CD4-positive, alpha-beta T cell (primary cell): ENCODE measurements at regions of chr9 and their contacts with region 1.

Region 1: GRCh38 chr9:136539427-136540421 is 6.1 kb downstream of the NOTCH1 start:
- DNase-seq: peak; percentile 54 to 95 (median 90)
- ATAC-seq: peak; percentile 68
- H3K4me3 ChIP-seq: peak overlapping the region; percentile 50
- H3K4me3 Mint-ChIP-seq: peak overlapping the region; percentile 91
- H3K27ac ChIP-seq: peak overlapping the region; percentile 94
- H3K27ac Mint-ChIP-seq: peak overlapping the region; percentile 97
- H3K4me1 ChIP-seq: peaks cover 94% of the 10 kb centered on the region
- H3K4me1 Mint-ChIP-seq: peaks cover 57% of the 10 kb centered on the region
- H3K27me3 ChIP-seq: no peaks in the 10 kb centered on the region
- H3K27me3 Mint-ChIP-seq: no peaks in the 10 kb centered on the region
- CTCF ChIP-seq: no peak

Region 2: DNA sequence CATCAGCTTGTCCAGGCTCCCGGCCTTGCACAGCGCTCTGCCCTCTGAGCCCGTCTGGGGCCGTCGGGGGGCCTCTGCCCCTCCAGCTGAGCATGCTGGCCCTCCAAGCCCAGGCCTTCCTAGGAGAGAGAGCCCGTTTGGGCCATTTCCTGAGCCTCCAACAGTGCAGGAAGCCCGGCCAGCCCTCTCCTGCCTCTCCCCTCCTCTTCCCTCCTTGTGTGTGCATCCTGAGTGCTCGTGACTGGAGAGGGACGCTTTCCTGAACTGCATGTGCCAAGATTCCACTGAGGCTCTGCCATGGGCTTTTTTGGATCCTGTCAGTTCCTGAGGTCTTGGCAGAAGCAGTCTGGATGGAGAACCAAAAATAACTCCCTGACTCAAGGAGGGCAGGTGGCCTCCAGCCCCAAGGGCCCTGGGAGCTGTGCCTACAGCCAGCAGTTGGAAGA is 1436.7 kb before region 1 on chr9:
- CTCF ChIA-PET with region 1: no interaction called
- POLR2A ChIA-PET with region 1: no interaction called
- intact Hi-C with region 1: no loop called
- DNase-seq: no peak
- ATAC-seq: no peak
- H3K4me3 ChIP-seq: no peak overlapping the region
- H3K4me3 Mint-ChIP-seq: no peak overlapping the region
- H3K27ac ChIP-seq: no peak overlapping the region
- H3K27ac Mint-ChIP-seq: no peak overlapping the region
- H3K4me1 ChIP-seq: no peaks in the 10 kb centered on the region
- H3K4me1 Mint-ChIP-seq: no peaks in the 10 kb centered on the region
- H3K27me3 ChIP-seq: peaks cover 5 to 34% of the 10 kb centered on the region in 2 experiments
- H3K27me3 Mint-ChIP-seq: peaks cover 47% of the 10 kb centered on the region
- CTCF ChIP-seq: no peak

Region 3: GRCh38 chr9:136474974-136475865 is 64.5 kb before region 1 on chr9:
- CTCF ChIA-PET with region 1: no interaction called
- POLR2A ChIA-PET with region 1: no interaction called
- intact Hi-C with region 1: no loop called
- DNase-seq: no peak
- ATAC-seq: no peak
- H3K4me3 ChIP-seq: no peak overlapping the region
- H3K4me3 Mint-ChIP-seq: no peak overlapping the region
- H3K27ac ChIP-seq: no peak overlapping the region
- H3K27ac Mint-ChIP-seq: no peak overlapping the region
- H3K4me1 ChIP-seq: peaks cover 9% of the 10 kb centered on the region
- H3K4me1 Mint-ChIP-seq: peaks cover 21% of the 10 kb centered on the region
- H3K27me3 ChIP-seq: no peaks in the 10 kb centered on the region
- H3K27me3 Mint-ChIP-seq: no peaks in the 10 kb centered on the region
- CTCF ChIP-seq: no peak

Region 4: GRCh38 chr9:136521537-136521936 is 18.2 kb before region 1 on chr9:
- CTCF ChIA-PET with region 1: no interaction called
- POLR2A ChIA-PET with region 1: interaction called, 49 read pairs
- intact Hi-C with region 1: no loop called
- DNase-seq: peak in 2 of 14 experiments; percentile 66 to 78
- ATAC-seq: no peak
- H3K4me3 ChIP-seq: no peak overlapping the region
- H3K4me3 Mint-ChIP-seq: no peak overlapping the region
- H3K27ac ChIP-seq: no peak overlapping the region
- H3K27ac Mint-ChIP-seq: no peak overlapping the region
- H3K4me1 ChIP-seq: no peaks in the 10 kb centered on the region
- H3K4me1 Mint-ChIP-seq: no peaks in the 10 kb centered on the region
- H3K27me3 ChIP-seq: no peaks in the 10 kb centered on the region
- H3K27me3 Mint-ChIP-seq: no peaks in the 10 kb centered on the region
- CTCF ChIP-seq: no peak

Region 5: GRCh38 chr9:136527721-136528691 is 11.7 kb before region 1 on chr9:
- CTCF ChIA-PET with region 1: interaction called, 5 read pairs
- POLR2A ChIA-PET with region 1: interaction called, 49 read pairs
- intact Hi-C with region 1: no loop called
- DNase-seq: peak in 1 of 14 experiments; percentile 60
- ATAC-seq: peak; percentile 30
- H3K4me3 ChIP-seq: no peak overlapping the region
- H3K4me3 Mint-ChIP-seq: no peak overlapping the region
- H3K27ac ChIP-seq: peak overlapping the region in 1 of 2 donors; percentile 50
- H3K27ac Mint-ChIP-seq: peak overlapping the region; percentile 55
- H3K4me1 ChIP-seq: peaks cover 47% of the 10 kb centered on the region
- H3K4me1 Mint-ChIP-seq: peaks cover 18% of the 10 kb centered on the region
- H3K27me3 ChIP-seq: no peaks in the 10 kb centered on the region
- H3K27me3 Mint-ChIP-seq: no peaks in the 10 kb centered on the region
- CTCF ChIP-seq: no peak

Region 6: GRCh38 chr9:136551401-136552116 is 11.8 kb after region 1 on chr9:
- CTCF ChIA-PET with region 1: no interaction called
- POLR2A ChIA-PET with region 1: interaction called, 17 read pairs
- intact Hi-C with region 1: no loop called
- DNase-seq: peak in 1 of 14 experiments; percentile 55
- ATAC-seq: no peak
- H3K4me3 ChIP-seq: no peak overlapping the region
- H3K4me3 Mint-ChIP-seq: peak overlapping the region; percentile 66
- H3K27ac ChIP-seq: no peak overlapping the region
- H3K27ac Mint-ChIP-seq: peak overlapping the region; percentile 77
- H3K4me1 ChIP-seq: peaks cover 34% of the 10 kb centered on the region
- H3K4me1 Mint-ChIP-seq: peaks cover 21% of the 10 kb centered on the region
- H3K27me3 ChIP-seq: no peaks in the 10 kb centered on the region
- H3K27me3 Mint-ChIP-seq: no peaks in the 10 kb centered on the region
- CTCF ChIP-seq: no peak

Region 7: DNA sequence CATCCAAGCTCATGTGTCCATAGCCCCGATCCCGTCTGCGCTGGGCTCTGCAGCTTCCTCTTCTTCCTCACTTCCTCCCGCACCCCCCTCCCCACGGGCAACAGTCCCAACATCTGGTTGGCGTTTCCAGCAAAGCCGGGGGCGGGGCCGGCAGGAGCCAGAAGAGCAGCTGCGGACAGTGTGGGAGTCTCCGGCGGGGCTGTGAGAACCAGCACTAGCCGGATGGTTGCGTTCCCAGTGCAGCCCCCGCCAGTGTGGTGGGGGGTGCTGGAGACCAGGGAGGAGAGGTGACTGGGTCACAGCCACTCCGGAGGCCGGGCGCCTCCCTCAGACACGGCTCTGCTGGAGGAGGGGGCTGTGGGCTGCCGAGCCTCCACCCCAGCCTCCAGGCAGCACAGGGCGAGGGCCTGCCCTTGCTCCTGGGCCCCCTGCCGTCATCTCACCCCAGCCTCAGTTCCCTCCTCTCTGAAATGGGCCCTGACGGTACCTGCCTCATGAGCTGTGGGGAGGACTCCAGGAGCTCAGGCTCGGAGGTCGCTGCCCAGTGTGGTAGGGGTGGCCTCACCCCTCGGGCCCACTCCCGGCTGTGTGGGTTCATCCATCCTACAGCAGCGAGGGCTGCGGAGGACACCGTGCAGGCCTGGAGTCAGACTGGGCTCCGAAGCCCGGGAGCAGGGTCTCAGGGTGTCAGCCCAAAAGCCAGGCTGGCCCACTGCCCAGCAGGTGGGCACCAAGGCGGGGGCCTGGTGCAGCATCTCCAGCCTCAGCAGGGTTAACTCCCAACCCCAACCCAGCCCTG is 47.6 kb after region 1 on chr9:
- CTCF ChIA-PET with region 1: no interaction called
- POLR2A ChIA-PET with region 1: interaction called, 10 read pairs
- intact Hi-C with region 1: no loop called
- DNase-seq: peak in 2 of 14 experiments; percentile 42 to 43
- ATAC-seq: no peak
- H3K4me3 ChIP-seq: no peak overlapping the region
- H3K4me3 Mint-ChIP-seq: no peak overlapping the region
- H3K27ac ChIP-seq: no peak overlapping the region
- H3K27ac Mint-ChIP-seq: no peak overlapping the region
- H3K4me1 ChIP-seq: peaks cover 29% of the 10 kb centered on the region
- H3K4me1 Mint-ChIP-seq: peaks cover 15% of the 10 kb centered on the region
- H3K27me3 ChIP-seq: no peaks in the 10 kb centered on the region
- H3K27me3 Mint-ChIP-seq: no peaks in the 10 kb centered on the region
- CTCF ChIP-seq: no peak